ENCODE measurements at regions of chr12 and their contacts with region 1.

Region 1: GRCh38 chr12:94139816-94140215 is 8.6 kb upstream of the PLXNC1 start:
- DNase-seq: no peak
- H3K4me3 ChIP-seq: no peak overlapping the region
- H3K27ac ChIP-seq: no peak overlapping the region
- H3K4me1 ChIP-seq: no peaks in the 10 kb centered on the region
- H3K27me3 ChIP-seq: peaks cover 0 to 32% (median 0%) of the 10 kb centered on the region in 4 donors
- CTCF ChIP-seq: no peak
- POLR2A ChIP-seq: no peak

Region 2: DNA sequence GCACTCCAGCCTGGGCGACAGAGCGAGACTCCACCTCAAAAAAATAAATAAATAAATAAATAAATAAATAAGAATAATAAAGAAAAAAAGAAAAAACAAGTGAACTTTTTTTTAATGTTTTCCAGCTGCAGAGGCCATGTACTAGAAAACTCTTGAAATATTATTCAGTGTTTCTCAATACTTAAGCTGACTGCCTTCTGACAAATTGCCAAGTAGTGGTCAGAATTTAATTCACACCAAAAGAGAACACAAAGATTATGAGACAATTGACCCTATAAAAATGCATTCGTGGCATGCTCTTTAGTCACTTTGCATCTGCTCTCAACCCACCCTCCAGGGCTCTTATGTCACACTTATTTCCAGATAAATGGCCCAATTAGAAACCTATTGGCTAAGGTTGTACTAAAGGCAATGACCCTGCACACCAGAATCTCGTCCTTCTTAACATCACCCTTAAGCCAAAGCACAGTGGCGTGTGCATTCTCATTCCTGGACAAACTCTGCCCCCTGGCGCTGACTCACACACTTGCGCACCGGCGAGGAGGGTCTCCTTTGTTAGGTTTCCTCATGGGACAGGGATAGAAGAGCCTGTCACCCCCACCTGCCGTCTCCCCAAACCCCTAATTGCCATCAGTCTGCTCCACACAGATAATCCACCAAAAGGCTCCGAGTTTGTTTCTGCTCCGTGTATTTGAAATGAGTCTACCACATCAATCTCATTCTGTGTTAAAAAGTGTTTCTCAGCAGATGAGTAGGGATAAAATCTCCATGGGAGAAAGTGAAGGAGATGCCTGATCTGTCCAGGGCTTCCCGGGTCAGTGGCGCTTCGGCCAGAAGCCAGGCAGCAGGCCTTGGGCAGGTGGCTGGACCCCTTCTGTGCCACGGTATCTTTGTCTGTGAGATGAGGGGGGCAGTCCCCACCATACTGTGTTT is 392.9 kb after region 1 on chr12:
- intact Hi-C with region 1: loop called (anchors 5 kb)
- DNase-seq: no peak
- H3K4me3 ChIP-seq: no peak overlapping the region
- H3K27ac ChIP-seq: no peak overlapping the region
- H3K4me1 ChIP-seq: peaks cover 0 to 5% (median 0%) of the 10 kb centered on the region in 3 donors
- H3K27me3 ChIP-seq: no peaks in the 10 kb centered on the region
- CTCF ChIP-seq: peak; percentile 44 to 73 (median 68)
- POLR2A ChIP-seq: no peak

Measured in esophagus squamous epithelium (tissue), 5 donors.